CD4-positive, alpha-beta memory T cell (primary cell): ENCODE measurements at regions of chr1 and their contacts with region 1.

Region 1: DNA sequence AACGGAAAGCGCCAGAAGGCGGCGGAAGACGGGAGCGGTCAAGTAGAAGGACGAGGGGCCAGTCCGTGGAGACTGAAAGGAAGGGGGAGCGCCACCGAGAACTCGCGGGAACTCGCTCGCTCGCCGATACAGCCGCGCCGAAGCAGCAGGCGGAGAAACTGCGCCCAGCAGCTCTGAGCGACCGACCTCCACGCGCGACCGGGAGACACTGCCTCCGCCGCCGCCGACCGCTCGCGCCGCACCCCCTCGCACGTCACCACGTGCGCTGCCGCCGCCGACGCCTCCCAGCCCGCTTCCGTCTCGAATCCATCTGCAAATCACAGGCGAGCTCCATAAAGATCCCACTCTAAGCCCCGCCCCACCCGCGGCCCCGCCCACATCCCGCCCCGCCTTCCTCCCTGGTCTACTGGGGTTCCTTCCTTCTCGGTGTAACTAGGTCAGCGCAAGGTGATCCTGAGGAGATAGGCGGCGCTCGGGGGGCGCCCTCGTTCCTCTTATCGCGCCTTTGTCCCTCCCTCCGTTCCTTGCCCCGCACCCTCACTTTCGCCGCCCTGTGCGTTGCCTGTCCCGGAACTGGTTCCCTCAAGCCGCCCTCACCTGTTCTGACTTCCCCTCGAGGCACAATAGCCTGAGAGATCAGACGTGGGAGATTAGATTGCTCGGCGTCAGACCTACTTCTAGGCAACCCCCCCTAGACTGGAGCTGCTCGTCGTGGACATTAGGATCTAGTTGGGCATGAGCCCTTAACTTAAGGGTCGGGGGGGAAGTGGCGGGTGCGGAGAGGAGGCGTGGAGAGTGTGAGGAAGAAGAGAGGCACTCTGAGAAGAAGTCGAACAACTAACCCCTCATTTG is at the start of gene IVNS1ABP:
- DNase-seq: peak; percentile 94 to 97 (median 96)
- H3K4me3 ChIP-seq: peak within 1 kb of the TSS; percentile 82 to 90
- H3K4me3 Mint-ChIP-seq: peak within 1 kb of the TSS; percentile 93 to 99 (median 97)
- H3K27ac ChIP-seq: peak within 1 kb of the TSS; percentile 99
- H3K27ac Mint-ChIP-seq: peak within 1 kb of the TSS; percentile 99 to 100 (median 99)
- H3K4me1 ChIP-seq: peaks cover 47% of the 10 kb centered on the region
- H3K4me1 Mint-ChIP-seq: peaks cover 29 to 58% (median 47%) of the 10 kb centered on the region in 4 donors
- H3K27me3 ChIP-seq: no peaks in the 10 kb centered on the region
- H3K27me3 Mint-ChIP-seq: no peaks in the 10 kb centered on the region
- total RNA-seq, gene IVNS1ABP: 179 to 187 TPM

Region 2: DNA sequence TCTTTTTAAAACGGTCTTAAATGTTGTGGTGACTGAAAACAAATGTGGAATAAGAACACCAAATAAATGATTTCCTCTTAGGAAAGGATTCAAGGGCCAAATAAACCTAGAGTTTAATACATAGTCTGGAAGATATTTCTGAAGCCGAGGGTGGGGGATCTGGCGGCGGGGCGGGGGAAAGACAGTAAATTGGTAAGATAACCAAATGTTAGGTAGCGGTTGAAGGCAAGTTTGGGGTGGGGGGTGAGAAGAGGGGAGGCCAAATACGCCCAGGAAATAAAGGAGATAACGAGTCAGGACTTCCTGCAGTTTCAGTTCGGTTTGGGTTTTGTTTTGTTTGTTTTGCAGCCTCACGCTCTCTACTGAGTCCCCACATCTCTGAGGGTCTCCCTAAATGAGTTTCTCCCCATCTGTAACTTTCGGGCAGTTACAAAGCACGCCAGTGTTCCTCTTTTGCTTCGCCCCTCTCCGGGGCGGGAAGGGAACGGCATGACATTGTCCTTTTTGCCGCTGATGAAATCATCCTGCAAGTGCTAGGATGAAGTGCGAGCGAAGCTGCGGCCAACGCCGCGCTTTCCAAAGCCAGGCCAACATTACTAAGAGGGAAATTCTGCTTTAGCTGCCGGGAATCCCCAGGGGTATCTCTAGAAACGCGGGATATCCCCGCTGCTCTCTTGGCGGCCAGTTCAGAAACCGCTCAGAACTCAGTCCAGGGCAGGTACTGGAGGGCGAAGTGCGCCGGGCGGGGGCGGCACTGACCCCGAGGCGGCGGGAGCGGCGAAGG is 343.8 kb before region 1 on chr1:
- CTCF ChIA-PET with region 1: no interaction called
- POLR2A ChIA-PET with region 1: interaction called, 9 read pairs
- intact Hi-C with region 1: loop called (anchors 5 kb)
- DNase-seq: peak in 3 of 5 donors; percentile 55 to 86 (median 71)
- H3K4me3 ChIP-seq: peak overlapping the region; percentile 70 to 85
- H3K4me3 Mint-ChIP-seq: peak overlapping the region; percentile 93 to 100 (median 98)
- H3K27ac ChIP-seq: peak overlapping the region; percentile 91
- H3K27ac Mint-ChIP-seq: peak overlapping the region; percentile 96 to 100 (median 97)
- H3K4me1 ChIP-seq: peaks cover 66% of the 10 kb centered on the region
- H3K4me1 Mint-ChIP-seq: peaks cover 37 to 74% (median 55%) of the 10 kb centered on the region in 4 donors
- H3K27me3 ChIP-seq: no peaks in the 10 kb centered on the region
- H3K27me3 Mint-ChIP-seq: no peaks in the 10 kb centered on the region

Region 3: GRCh38 chr1:185059950-185060571 is 257.2 kb before region 1 on chr1:
- CTCF ChIA-PET with region 1: no interaction called
- POLR2A ChIA-PET with region 1: no interaction called
- intact Hi-C with region 1: no loop called
- DNase-seq: no peak
- H3K4me3 ChIP-seq: no peak overlapping the region
- H3K4me3 Mint-ChIP-seq: peak overlapping the region in 1 of 8 donors; percentile 51
- H3K27ac ChIP-seq: no peak overlapping the region
- H3K27ac Mint-ChIP-seq: no peak overlapping the region
- H3K4me1 ChIP-seq: peaks cover 16% of the 10 kb centered on the region
- H3K4me1 Mint-ChIP-seq: peaks cover 39 to 78% (median 59%) of the 10 kb centered on the region in 4 donors
- H3K27me3 ChIP-seq: no peaks in the 10 kb centered on the region
- H3K27me3 Mint-ChIP-seq: no peaks in the 10 kb centered on the region

Region 4: DNA sequence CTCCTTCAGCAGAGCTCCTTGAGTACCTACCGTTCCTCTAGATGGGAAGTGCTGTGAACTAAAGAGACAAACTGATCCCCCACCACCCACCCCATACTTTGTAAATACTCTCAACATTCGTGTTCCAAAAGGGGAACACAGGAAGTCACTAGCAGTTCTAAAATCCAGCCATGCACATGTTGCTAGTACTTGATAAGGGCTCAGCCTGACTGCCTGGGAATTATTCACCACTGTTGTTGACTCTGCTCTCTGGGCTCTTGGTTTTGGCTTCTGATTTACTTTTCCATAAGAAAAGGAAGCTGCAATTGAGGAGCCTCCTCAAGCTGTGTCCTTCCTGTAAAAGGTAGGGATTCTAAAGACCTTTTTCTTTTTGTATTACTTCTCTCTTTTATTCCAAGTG is 67.7 kb before region 1 on chr1:
- CTCF ChIA-PET with region 1: interaction called, 5 read pairs
- POLR2A ChIA-PET with region 1: interaction called, 15 read pairs
- intact Hi-C with region 1: no loop called
- DNase-seq: no peak
- H3K4me3 ChIP-seq: no peak overlapping the region
- H3K4me3 Mint-ChIP-seq: no peak overlapping the region
- H3K27ac ChIP-seq: no peak overlapping the region
- H3K27ac Mint-ChIP-seq: peak overlapping the region in 5 of 7 donors; percentile 15 to 68 (median 19)
- H3K4me1 ChIP-seq: no peaks in the 10 kb centered on the region
- H3K4me1 Mint-ChIP-seq: peaks cover 6 to 20% (median 10%) of the 10 kb centered on the region in 4 donors
- H3K27me3 ChIP-seq: no peaks in the 10 kb centered on the region
- H3K27me3 Mint-ChIP-seq: no peaks in the 10 kb centered on the region

Region 5: DNA sequence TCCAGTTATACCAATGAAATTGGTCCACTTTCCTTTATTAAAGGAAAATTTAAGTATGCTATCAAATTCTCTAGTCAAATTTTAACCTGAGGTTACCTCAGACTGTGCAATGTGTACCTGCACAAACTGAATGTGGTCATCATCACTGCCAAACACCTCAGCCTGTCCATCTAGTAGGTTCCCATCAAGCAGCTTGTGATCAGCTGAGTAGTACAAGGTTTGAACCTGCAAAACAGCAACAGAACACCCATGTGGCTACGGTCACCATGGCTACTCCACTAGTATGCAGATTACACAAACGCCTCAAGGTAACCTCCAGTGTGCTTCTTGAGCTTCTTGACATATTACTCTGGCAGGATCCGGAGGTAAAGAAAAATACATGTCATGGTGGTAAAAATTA is 11.8 kb before region 1 on chr1:
- CTCF ChIA-PET with region 1: interaction called, 3 read pairs
- POLR2A ChIA-PET with region 1: interaction called, 12 read pairs
- intact Hi-C with region 1: loop called (anchors 2 kb)
- DNase-seq: no peak
- H3K4me3 ChIP-seq: no peak overlapping the region
- H3K4me3 Mint-ChIP-seq: no peak overlapping the region
- H3K27ac ChIP-seq: no peak overlapping the region
- H3K27ac Mint-ChIP-seq: peak overlapping the region in 4 of 7 donors; percentile 25 to 72 (median 39)
- H3K4me1 ChIP-seq: no peaks in the 10 kb centered on the region
- H3K4me1 Mint-ChIP-seq: peaks cover 3 to 13% (median 8%) of the 10 kb centered on the region in 4 donors
- H3K27me3 ChIP-seq: no peaks in the 10 kb centered on the region
- H3K27me3 Mint-ChIP-seq: no peaks in the 10 kb centered on the region

Region 6: GRCh38 chr1:185559684-185560331 is 242.5 kb after region 1 on chr1:
- CTCF ChIA-PET with region 1: interaction called, 34 read pairs
- POLR2A ChIA-PET with region 1: interaction called, 149 read pairs
- intact Hi-C with region 1: loop called (anchors 1 kb)
- DNase-seq: peak; percentile 56 to 60 (median 59)
- H3K4me3 ChIP-seq: no peak overlapping the region
- H3K4me3 Mint-ChIP-seq: peak overlapping the region in 6 of 8 donors; percentile 5 to 78 (median 62)
- H3K27ac ChIP-seq: no peak overlapping the region
- H3K27ac Mint-ChIP-seq: peak overlapping the region; percentile 76 to 94 (median 86)
- H3K4me1 ChIP-seq: peaks cover 51% of the 10 kb centered on the region
- H3K4me1 Mint-ChIP-seq: peaks cover 39 to 52% (median 46%) of the 10 kb centered on the region in 4 donors
- H3K27me3 ChIP-seq: no peaks in the 10 kb centered on the region
- H3K27me3 Mint-ChIP-seq: no peaks in the 10 kb centered on the region

Region 7: DNA sequence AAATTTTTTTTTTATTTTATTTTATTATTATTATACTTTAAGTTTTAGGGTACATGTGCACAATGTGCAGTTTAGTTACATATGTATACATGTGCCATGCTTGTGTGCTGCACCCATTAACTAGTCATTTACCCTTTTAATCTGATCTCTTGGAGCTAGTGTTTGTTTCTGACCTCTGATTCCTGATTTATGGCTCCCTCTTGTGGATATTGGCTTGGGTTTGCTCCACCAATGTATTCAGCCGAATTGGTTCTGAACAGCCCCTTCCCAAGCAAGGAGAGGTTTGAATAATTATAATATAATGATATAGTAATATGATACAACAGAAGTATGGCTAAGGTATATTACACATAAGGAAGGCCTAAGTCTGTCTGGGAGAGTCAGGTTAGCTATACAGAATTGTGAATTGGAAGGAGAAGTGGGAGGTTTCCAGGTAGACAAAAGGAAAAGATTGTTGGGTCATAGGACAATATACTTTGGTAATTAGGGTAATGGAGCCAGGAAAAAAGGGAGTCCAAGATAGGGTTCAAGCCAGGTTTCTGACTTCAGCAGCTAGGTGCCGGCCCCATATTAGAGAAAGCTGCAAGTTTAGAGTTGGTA is 363.9 kb after region 1 on chr1:
- CTCF ChIA-PET with region 1: interaction called, 66 read pairs
- POLR2A ChIA-PET with region 1: interaction called, 82 read pairs
- intact Hi-C with region 1: loop called (anchors 1 kb)
- DNase-seq: peak in 4 of 5 donors; percentile 36 to 43 (median 38)
- H3K4me3 ChIP-seq: no peak overlapping the region
- H3K4me3 Mint-ChIP-seq: peak overlapping the region in 1 of 8 donors; percentile 34
- H3K27ac ChIP-seq: no peak overlapping the region
- H3K27ac Mint-ChIP-seq: no peak overlapping the region
- H3K4me1 ChIP-seq: peaks cover 26% of the 10 kb centered on the region
- H3K4me1 Mint-ChIP-seq: peaks cover 19 to 32% (median 26%) of the 10 kb centered on the region in 4 donors
- H3K27me3 ChIP-seq: no peaks in the 10 kb centered on the region
- H3K27me3 Mint-ChIP-seq: no peaks in the 10 kb centered on the region

Region 8: DNA sequence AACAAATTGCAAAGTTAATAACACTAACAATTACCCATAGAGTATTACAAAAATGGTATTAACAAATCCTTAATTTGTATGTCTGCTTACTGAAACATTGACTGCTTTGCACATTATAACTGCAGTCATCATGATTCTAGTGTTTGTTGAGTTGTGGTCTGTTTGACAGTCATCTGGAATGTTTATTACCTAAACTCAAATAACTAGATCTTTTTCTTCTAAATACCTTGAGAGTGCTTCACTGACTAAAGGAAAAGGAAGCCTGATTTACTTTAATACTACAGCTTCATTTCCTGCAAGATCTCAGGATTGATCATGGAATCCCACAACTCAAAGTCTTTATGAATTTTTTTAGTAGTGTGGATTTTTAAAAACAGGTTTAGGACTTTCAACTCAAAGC is 486.9 kb after region 1 on chr1:
- CTCF ChIA-PET with region 1: no interaction called
- POLR2A ChIA-PET with region 1: no interaction called
- intact Hi-C with region 1: no loop called
- DNase-seq: no peak
- H3K4me3 ChIP-seq: no peak overlapping the region
- H3K4me3 Mint-ChIP-seq: no peak overlapping the region
- H3K27ac ChIP-seq: no peak overlapping the region
- H3K27ac Mint-ChIP-seq: no peak overlapping the region
- H3K4me1 ChIP-seq: no peaks in the 10 kb centered on the region
- H3K4me1 Mint-ChIP-seq: peaks cover 0 to 2% (median 0%) of the 10 kb centered on the region in 4 donors
- H3K27me3 ChIP-seq: no peaks in the 10 kb centered on the region
- H3K27me3 Mint-ChIP-seq: peaks cover 1 to 4% of the 10 kb centered on the region in 2 donors